HEK293T (cell line): ENCODE measurements at regions of chr17 and their contacts with region 1.

Region 1: GRCh38 chr17:31842183-31843069 is 16.6 kb downstream of the COPRS start:
- DNase-seq: peak; percentile 75

Region 2: GRCh38 chr17:31558748-31559644 is 283.4 kb before region 1 on chr17:
- CTCF ChIA-PET with region 1: interaction called, 12 read pairs
- POLR2A ChIA-PET with region 1: interaction called, 4 read pairs
- DNase-seq: peak; percentile 70

Region 3: DNA sequence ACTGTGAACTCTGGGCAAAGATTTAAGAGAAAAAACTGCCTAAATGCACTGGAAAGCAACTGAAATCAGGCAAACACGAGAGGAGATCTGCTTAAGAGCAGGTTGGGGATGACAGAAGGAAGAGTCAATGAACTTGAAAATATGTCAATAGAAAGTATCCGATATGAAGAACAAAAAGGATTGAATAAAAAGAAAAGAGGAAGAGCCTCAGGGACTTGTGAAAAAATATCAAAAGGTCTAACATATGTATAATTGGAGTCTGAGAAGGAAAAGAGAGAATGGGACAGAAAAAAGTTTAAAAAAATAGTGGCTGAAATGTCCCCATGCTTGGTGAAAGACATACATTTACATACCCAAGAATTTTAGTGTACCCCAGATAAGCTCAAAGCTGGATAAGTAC is 178.8 kb before region 1 on chr17:
- CTCF ChIA-PET with region 1: no interaction called
- POLR2A ChIA-PET with region 1: no interaction called
- DNase-seq: no peak